ENCODE measurements at regions of chr1 and their contacts with region 1.

Region 1: GRCh38 chr1:19087737-19088594 is 122.1 kb downstream of the UBR4 start:
- DNase-seq: no peak
- ATAC-seq: no peak

Region 2: GRCh38 chr1:18883636-18884418 is 204.1 kb before region 1 on chr1:
- intact Hi-C with region 1: loop called (anchors 5 kb)
- DNase-seq: peak; percentile 83
- ATAC-seq: peak; percentile 51

Region 3: GRCh38 chr1:18956369-18957135 is 131.4 kb before region 1 on chr1 and contains the start of gene IFFO2:
- intact Hi-C with region 1: loop called (anchors 5 kb)
- DNase-seq: peak; percentile 99
- ATAC-seq: peak; percentile 99
- total RNA-seq, gene IFFO2: 5.2 TPM

Region 4: DNA sequence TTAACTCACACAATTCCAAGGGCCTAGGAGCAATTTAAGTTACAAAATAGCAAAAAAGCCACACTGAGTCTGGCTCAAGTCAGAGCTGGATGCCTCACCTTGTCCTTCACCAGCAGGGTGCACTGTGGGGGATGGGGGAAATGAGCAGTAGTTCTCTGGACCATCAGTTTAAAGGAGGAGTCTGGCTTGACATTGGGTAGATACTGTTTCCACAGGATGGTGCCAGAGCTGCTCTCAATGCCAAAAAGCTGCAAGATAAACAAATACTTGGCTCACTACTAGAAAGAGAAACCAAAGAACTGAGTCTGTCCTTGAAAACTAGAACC is 144.5 kb after region 1 on chr1:
- intact Hi-C with region 1: no loop called
- DNase-seq: no peak
- ATAC-seq: peak; percentile 82